A549 (cell line): ENCODE measurements at regions of chr19 and their contacts with region 1.

Region 1: GRCh38 chr19:38402967-38403861 is at the start of gene FAM98C:
- DNase-seq: peak; percentile 99 to 100
- ATAC-seq: peak; percentile 93 to 98
- H3K4me3 ChIP-seq: peak within 1 kb of the TSS; percentile 66
- H3K27ac ChIP-seq: peak within 1 kb of the TSS; percentile 80 to 89
- H3K4me1 ChIP-seq: peaks cover 10% of the 10 kb centered on the region
- CTCF ChIP-seq: peak; percentile 100
- EP300 ChIP-seq: no peak
- POLR2A ChIP-seq: peak; percentile 72
- RAD21 ChIP-seq: peak; percentile 96 to 100
- polyA plus RNA-seq, gene FAM98C: 12.8 and 13.8 TPM in 2 replicates

Region 2: DNA sequence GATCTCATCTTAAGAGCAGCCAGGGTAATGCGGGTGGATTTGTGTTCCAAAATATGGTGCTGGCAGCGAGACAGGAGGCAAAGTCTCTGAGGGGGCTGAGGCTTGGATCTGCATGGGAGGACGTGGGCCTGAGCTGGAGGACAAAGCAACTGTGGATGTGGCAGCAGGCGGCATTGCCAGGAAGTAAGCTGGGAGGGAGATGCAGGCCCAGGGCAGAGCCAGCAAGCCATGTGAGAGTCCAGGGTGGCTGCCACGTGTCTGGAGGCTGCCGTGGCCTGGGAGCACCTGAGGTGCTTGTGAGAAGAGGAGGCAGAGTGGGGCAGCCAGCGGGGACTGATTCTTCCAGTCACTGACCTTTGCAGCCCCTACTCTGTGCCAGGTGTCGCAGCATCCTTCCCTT is 231.2 kb before region 1 on chr19:
- CTCF ChIA-PET with region 1: no interaction called
- POLR2A ChIA-PET with region 1: no interaction called
- DNase-seq: no peak
- ATAC-seq: no peak
- H3K4me3 ChIP-seq: no peak overlapping the region
- H3K27ac ChIP-seq: no peak overlapping the region
- H3K4me1 ChIP-seq: no peaks in the 10 kb centered on the region
- CTCF ChIP-seq: no peak
- EP300 ChIP-seq: no peak
- POLR2A ChIP-seq: no peak
- RAD21 ChIP-seq: no peak

Region 3: DNA sequence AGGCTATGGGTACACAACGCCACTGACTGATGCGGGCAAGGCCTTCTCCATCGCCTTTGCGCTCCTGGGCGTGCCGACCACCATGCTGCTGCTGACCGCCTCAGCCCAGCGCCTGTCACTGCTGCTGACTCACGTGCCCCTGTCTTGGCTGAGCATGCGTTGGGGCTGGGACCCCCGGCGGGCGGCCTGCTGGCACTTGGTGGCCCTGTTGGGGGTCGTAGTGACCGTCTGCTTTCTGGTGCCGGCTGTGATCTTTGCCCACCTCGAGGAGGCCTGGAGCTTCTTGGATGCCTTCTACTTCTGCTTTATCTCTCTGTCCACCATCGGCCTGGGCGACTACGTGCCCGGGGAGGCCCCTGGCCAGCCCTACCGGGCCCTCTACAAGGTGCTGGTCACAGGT is 76.6 kb before region 1 on chr19:
- CTCF ChIA-PET with region 1: no interaction called
- POLR2A ChIA-PET with region 1: no interaction called
- DNase-seq: no peak
- ATAC-seq: no peak
- H3K4me3 ChIP-seq: no peak overlapping the region
- H3K27ac ChIP-seq: no peak overlapping the region
- H3K4me1 ChIP-seq: no peaks in the 10 kb centered on the region
- CTCF ChIP-seq: no peak
- EP300 ChIP-seq: no peak
- POLR2A ChIP-seq: no peak
- RAD21 ChIP-seq: no peak

Region 4: GRCh38 chr19:38361633-38362075 is 41.6 kb before region 1 on chr19:
- CTCF ChIA-PET with region 1: interaction called, 11 read pairs
- POLR2A ChIA-PET with region 1: interaction called, 4 read pairs
- DNase-seq: peak; percentile 96 to 99
- ATAC-seq: peak; percentile 81 to 93
- H3K4me3 ChIP-seq: peak overlapping the region; percentile 65
- H3K27ac ChIP-seq: peak overlapping the region; percentile 62 to 81
- H3K4me1 ChIP-seq: peaks cover 9% of the 10 kb centered on the region; the same call in 1 of the 3 replicates
- CTCF ChIP-seq: no peak
- EP300 ChIP-seq: no peak
- POLR2A ChIP-seq: no peak
- RAD21 ChIP-seq: no peak

Region 5: DNA sequence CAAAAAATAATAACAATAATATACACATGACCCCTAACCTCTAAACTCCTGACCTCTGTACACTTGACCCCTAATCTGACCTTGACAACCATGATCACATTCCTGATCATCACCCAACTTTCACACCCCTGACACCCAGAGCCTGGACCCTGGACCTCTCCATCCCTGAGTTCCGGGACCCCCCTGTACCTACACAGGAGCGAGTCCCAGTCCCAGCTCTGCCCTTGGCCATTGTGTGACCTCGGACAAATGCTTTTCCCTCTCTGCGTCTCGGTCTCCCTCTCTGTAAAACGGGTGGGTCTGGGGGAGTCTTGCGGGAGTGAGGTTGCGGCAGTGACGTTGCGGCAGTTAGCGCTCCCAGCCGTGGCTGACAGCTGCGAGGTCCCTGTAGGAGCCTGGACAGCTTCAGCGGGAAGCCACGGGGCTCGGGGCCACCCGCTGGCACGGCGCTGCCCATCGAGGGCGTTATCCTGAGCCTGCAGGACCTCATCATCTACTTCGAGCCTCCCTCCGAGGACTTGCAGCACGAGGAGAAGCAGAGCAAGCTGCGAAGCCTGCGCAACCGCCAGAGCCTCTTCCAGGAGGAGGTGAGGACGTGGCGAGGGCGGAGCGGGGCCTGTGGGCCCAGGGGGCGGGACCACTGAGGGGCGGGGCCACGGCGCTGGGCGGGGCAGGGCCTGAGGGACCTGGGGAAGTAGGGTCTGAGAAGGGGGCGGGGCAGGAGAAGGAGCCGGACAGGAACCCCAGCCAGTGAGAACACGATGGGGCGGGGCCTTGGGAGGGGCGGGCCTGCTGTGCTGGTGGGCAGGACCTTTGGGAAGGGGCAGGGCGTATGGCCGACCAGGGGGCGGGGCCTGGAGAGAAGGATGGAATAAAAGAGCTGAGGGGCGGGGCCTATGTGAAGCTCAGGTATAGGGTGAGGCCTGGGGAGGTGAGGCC is 49.5 kb after region 1 on chr19:
- CTCF ChIA-PET with region 1: interaction called, 22 read pairs
- POLR2A ChIA-PET with region 1: no interaction called
- DNase-seq: peak in 1 of 2 experiments; percentile 69
- ATAC-seq: peak; percentile 4 to 66; a peak in 3 of 6 replicates
- H3K4me3 ChIP-seq: no peak overlapping the region
- H3K27ac ChIP-seq: no peak overlapping the region
- H3K4me1 ChIP-seq: no peaks in the 10 kb centered on the region
- CTCF ChIP-seq: no peak
- EP300 ChIP-seq: no peak
- POLR2A ChIP-seq: no peak
- RAD21 ChIP-seq: no peak

Region 6: DNA sequence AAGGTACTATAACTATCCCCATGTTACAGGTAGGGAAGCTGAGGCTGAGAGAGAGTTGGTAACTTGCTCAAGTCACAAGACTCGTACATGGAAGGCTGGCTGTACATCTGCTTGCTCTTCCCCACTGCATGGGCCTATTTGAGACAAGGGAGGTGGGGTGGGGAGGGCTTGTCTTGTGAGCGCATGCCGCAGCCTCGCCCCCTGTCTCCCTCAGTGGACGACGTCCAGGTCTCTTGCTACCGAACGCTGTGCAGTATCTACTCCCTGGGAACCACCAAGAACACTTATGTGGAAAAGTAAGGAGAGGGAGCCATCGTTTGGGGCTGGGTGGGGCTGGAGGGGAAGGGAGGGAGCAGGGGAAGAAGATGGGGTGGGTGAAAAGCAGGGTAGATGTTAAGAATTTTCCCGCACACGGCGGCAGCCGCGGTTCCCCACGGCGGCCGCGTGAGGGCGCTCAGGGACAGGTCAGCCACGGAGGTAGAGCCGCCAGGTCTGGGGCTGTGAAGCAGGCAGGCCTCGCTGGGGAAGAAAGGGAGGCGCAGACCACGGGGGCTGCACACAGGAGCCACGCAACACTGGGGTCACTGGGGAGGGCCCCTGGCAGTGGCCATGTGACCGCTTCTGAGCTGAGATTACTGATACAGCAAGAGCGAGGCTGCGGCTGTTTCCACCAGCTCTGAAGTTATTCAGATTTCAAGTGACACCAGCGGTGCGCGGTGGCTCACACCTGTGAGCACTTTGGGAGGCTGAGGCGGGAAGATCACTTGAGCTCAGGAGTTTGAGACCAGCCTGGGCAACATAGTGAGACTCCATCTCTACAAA is 111.8 kb after region 1 on chr19:
- CTCF ChIA-PET with region 1: interaction called, 105 read pairs
- POLR2A ChIA-PET with region 1: no interaction called
- DNase-seq: peak; percentile 83 to 98
- ATAC-seq: peak; percentile 78 to 94
- H3K4me3 ChIP-seq: no peak overlapping the region
- H3K27ac ChIP-seq: peak overlapping the region; percentile 15 to 54; a peak in 4 of 6 replicates
- H3K4me1 ChIP-seq: peaks cover 8% of the 10 kb centered on the region; the same call in 2 of the 3 replicates
- CTCF ChIP-seq: peak; percentile 99
- EP300 ChIP-seq: no peak
- POLR2A ChIP-seq: no peak
- RAD21 ChIP-seq: peak; percentile 98 to 99

Region 7: DNA sequence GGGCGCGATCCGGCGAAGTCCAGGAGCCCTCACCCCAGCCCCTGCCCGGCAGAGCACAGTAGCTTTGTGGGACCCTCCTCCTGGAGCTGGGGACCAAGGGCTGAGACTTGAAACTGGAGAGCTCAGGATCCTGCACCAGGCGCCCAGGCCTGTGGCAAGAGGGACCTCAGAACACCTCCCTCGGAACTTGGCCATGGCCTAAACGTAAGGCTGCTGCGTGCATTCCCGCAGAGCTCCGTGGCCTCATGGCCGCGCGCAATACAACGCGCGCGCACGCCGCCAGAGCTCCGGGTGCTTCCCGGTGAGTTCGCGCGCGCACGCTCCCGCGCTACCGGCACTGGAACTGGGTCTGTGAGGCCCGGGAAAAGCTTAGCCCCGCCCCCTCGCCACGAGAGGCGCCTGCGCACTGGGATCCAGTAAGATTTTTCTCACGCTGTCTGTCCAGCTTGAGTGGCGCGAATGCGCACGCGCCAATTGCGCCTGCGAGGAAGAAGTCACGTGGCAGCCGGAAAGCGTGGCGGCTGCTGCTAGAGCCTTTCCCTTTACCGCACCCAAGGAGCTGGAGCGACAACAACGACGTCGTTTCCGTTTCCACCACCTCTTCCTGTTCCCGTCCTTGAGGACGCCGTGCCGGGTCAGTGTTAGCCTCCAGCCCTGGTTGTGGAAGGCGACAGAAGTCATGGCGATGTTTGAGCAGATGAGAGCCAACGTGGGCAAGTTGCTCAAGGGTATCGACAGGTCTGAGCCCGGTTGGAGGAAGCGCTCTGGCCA is 215.6 kb after region 1 on chr19 and contains the start of gene EIF3K:
- CTCF ChIA-PET with region 1: interaction called, 20 read pairs
- POLR2A ChIA-PET with region 1: interaction called, 8 read pairs
- DNase-seq: peak; percentile 100
- ATAC-seq: peak; percentile 87 to 93
- H3K4me3 ChIP-seq: peak within 1 kb of the TSS; percentile 86
- H3K27ac ChIP-seq: peak within 1 kb of the TSS; percentile 84 to 87
- H3K4me1 ChIP-seq: peaks cover 14% of the 10 kb centered on the region
- CTCF ChIP-seq: no peak
- EP300 ChIP-seq: no peak
- POLR2A ChIP-seq: peak; percentile 85
- RAD21 ChIP-seq: peak in 1 of 2 experiments; percentile 10; a peak in 1 of 5 replicates
- polyA plus RNA-seq, gene EIF3K: 419 and 491 TPM in 2 replicates

Region 8: GRCh38 chr19:38736036-38736412 is 332.8 kb after region 1 on chr19:
- CTCF ChIA-PET with region 1: interaction called, 10 read pairs
- POLR2A ChIA-PET with region 1: no interaction called
- DNase-seq: peak; percentile 80 to 81
- ATAC-seq: peak; percentile 11 to 53
- H3K4me3 ChIP-seq: peak overlapping the region; percentile 49
- H3K27ac ChIP-seq: peak overlapping the region; percentile 70 to 88
- H3K4me1 ChIP-seq: peaks cover 57% of the 10 kb centered on the region
- CTCF ChIP-seq: 0 out of 3 replicates have a peak, but pooled peaks have one; percentile 12
- EP300 ChIP-seq: no peak
- POLR2A ChIP-seq: peak; percentile 43; the same call in 1 of the 2 replicates
- RAD21 ChIP-seq: peak; percentile 13 to 43; a peak in 4 of 5 replicates

Region 9: GRCh38 chr19:39328046-39328705 is 925.0 kb after region 1 on chr19:
- CTCF ChIA-PET with region 1: interaction called, 10 read pairs
- POLR2A ChIA-PET with region 1: no interaction called
- DNase-seq: peak; percentile 83 to 97
- ATAC-seq: peak; percentile 74 to 83
- H3K4me3 ChIP-seq: no peak overlapping the region
- H3K27ac ChIP-seq: peak overlapping the region in 1 of 2 experiments; percentile 19; a peak in 2 of 6 replicates
- H3K4me1 ChIP-seq: peaks cover 10% of the 10 kb centered on the region; the same call in 1 of the 3 replicates
- CTCF ChIP-seq: peak; percentile 100
- EP300 ChIP-seq: no peak
- POLR2A ChIP-seq: no peak
- RAD21 ChIP-seq: peak; percentile 100